ENCODE measurements at regions of chr10 and their contacts with region 1.

Region 1: DNA sequence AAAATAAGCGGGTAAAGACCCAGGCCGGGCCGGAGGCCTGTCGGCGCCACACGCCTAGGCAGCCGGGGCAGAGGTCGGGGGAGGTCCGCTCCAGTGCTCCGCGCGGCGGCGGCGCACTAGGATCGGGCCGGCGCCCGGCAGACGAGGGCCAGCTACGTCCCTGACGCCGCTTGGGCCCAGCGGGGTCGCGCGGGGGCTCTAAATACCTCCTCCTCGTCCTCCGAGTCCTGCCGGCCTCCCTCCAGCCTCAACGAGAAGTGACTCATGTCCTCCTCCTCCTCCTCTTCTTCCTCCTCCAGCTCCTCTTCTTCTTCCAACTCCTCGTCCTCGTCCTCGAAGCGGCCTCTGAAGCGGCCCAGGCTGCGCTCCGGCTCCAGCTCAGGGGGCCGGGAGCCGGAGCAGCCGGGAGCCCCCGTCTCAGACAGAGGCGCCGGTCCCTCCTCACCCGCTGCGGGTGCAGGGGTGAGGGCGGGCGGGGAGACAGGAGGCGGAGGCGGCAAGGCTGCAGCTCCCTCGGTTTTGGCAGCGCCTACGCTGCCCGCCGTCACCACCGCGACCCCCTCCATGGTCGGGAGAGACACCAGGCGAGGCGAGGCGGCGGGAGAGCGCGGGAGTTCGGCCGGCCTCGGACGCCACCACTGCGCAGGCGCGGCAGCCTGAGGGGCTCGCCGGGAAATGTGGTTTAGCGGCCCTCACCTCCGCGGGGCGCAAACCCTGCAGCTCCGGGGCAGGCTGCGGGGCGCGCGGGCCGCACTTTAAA is at the start of gene PCGF6:
- DNase-seq: peak; percentile 75
- ATAC-seq: peak; percentile 85
- H3K4me3 Mint-ChIP-seq: peak within 1 kb of the TSS; percentile 94
- H3K27ac Mint-ChIP-seq: peak within 1 kb of the TSS; percentile 92
- H3K4me1 Mint-ChIP-seq: peaks cover 12% of the 10 kb centered on the region
- H3K27me3 Mint-ChIP-seq: no peaks in the 10 kb centered on the region
- total RNA-seq, gene PCGF6: 14.9 to 17.2 TPM

Region 2: DNA sequence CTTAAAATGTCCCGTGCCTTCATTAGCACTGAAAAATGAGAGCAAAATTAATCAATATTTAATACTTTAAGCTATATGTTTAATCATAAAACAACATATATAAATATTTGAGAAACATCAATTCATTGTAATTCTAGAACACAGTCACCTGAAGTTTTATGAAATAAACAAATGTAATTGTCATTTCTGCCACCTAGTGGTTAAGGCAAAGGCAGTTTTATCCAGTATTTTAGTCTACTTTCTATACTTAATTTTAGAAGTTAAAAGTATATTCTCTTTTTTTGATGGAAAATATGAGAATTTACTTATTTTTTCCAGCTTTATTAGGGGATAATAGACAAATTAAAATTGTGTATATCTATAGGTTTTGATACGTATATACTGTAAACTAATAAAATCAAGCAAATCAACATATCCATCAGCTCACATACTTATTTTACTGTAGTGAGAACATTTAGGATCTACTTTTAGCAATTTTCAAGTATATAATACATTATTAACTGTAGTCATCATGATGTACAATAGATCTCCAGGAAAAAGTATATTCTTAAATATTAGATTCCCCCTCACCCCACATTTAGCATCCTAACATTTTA is 16.7 kb before region 1 on chr10:
- CTCF ChIA-PET with region 1: interaction called, 13 read pairs
- POLR2A ChIA-PET with region 1: no interaction called
- DNase-seq: no peak
- ATAC-seq: no peak
- H3K4me3 Mint-ChIP-seq: no peak overlapping the region
- H3K27ac Mint-ChIP-seq: no peak overlapping the region
- H3K4me1 Mint-ChIP-seq: no peaks in the 10 kb centered on the region
- H3K27me3 Mint-ChIP-seq: no peaks in the 10 kb centered on the region

Region 3: DNA sequence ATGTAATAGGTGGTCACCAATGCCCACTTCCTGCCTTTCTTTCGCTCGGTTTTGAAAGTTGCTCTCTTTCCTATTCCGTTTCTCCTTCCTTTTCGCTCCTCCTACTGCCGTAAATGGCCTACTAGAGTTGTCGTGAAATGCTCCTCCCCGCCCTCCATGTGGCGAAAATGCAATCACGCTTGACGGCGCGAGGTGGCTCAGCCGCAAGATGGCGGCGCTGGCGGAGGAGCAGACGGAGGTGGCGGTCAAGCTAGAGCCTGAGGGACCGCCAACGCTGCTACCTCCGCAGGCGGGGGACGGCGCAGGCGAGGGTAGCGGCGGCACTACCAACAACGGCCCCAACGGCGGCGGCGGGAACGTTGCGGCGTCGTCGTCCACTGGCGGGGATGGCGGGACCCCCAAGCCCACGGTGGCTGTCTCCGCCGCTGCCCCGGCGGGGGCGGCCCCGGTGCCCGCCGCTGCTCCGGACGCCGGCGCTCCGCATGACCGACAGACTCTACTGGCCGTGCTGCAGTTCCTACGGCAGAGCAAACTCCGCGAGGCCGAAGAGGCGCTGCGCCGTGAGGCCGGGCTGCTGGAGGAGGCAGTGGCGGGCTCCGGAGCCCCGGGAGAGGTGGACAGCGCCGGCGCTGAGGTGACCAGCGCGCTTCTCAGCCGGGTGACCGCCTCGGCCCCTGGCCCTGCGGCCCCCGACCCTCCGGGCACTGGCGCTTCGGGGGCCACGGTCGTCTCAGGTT is 17.3 kb after region 1 on chr10 and contains the start of gene TAF5:
- CTCF ChIA-PET with region 1: interaction called, 13 read pairs
- POLR2A ChIA-PET with region 1: interaction called, 15 read pairs
- DNase-seq: peak; percentile 96
- ATAC-seq: peak; percentile 64
- H3K4me3 Mint-ChIP-seq: peak within 1 kb of the TSS; percentile 89
- H3K27ac Mint-ChIP-seq: peak within 1 kb of the TSS; percentile 93
- H3K4me1 Mint-ChIP-seq: peaks cover 23% of the 10 kb centered on the region
- H3K27me3 Mint-ChIP-seq: no peaks in the 10 kb centered on the region
- total RNA-seq, gene TAF5: 14.5 to 14.8 TPM